Gastrocnemius medialis (tissue), 4 donors: ENCODE measurements at regions of chr19 and their contacts with region 1.

Region 1: GRCh38 chr19:35140962-35141637 is 2.0 kb upstream of the FXYD7 start:
- DNase-seq: peak; percentile 92 to 94
- ATAC-seq: peak; percentile 44 to 51
- H3K4me3 ChIP-seq: peak overlapping the region; percentile 43 to 73 (median 64)
- H3K27ac ChIP-seq: peak overlapping the region; percentile 99 to 100 (median 99)
- H3K4me1 ChIP-seq: peaks cover 33 to 38% of the 10 kb centered on the region in 2 donors
- H3K27me3 ChIP-seq: no peaks in the 10 kb centered on the region
- CTCF ChIP-seq: peak; percentile 7 to 76 (median 54)
- POLR2A ChIP-seq: peak; percentile 88 to 94

Region 2: GRCh38 chr19:34999498-35000341 is 141.4 kb before region 1 on chr19 and contains the start of gene GRAMD1A:
- in situ Hi-C with region 1: no loop called
- intact Hi-C with region 1: loop called (anchors 1 kb)
- DNase-seq: peak; percentile 76 to 86
- ATAC-seq: peak; percentile 83
- H3K4me3 ChIP-seq: peak within 1 kb of the TSS; percentile 67 to 84 (median 73)
- H3K27ac ChIP-seq: peak within 1 kb of the TSS; percentile 91 to 99 (median 97)
- H3K4me1 ChIP-seq: peaks cover 29 to 38% of the 10 kb centered on the region in 2 donors
- H3K27me3 ChIP-seq: no peaks in the 10 kb centered on the region
- CTCF ChIP-seq: no peak
- POLR2A ChIP-seq: peak; percentile 6 to 79
- total RNA-seq, gene GRAMD1A: 38.8 to 45.1 (median 43.7) TPM

Region 3: GRCh38 chr19:35044317-35045117 is 96.6 kb before region 1 on chr19:
- in situ Hi-C with region 1: no loop called
- intact Hi-C with region 1: loop called (anchors 2 kb)
- DNase-seq: peak in 1 of 2 donors; percentile 68
- ATAC-seq: no peak
- H3K4me3 ChIP-seq: no peak overlapping the region
- H3K27ac ChIP-seq: peak overlapping the region; percentile 97 to 98 (median 98)
- H3K4me1 ChIP-seq: peaks cover 59 to 63% of the 10 kb centered on the region in 2 donors
- H3K27me3 ChIP-seq: no peaks in the 10 kb centered on the region
- CTCF ChIP-seq: peak; percentile 96 to 98 (median 97)
- POLR2A ChIP-seq: no peak

Region 4: DNA sequence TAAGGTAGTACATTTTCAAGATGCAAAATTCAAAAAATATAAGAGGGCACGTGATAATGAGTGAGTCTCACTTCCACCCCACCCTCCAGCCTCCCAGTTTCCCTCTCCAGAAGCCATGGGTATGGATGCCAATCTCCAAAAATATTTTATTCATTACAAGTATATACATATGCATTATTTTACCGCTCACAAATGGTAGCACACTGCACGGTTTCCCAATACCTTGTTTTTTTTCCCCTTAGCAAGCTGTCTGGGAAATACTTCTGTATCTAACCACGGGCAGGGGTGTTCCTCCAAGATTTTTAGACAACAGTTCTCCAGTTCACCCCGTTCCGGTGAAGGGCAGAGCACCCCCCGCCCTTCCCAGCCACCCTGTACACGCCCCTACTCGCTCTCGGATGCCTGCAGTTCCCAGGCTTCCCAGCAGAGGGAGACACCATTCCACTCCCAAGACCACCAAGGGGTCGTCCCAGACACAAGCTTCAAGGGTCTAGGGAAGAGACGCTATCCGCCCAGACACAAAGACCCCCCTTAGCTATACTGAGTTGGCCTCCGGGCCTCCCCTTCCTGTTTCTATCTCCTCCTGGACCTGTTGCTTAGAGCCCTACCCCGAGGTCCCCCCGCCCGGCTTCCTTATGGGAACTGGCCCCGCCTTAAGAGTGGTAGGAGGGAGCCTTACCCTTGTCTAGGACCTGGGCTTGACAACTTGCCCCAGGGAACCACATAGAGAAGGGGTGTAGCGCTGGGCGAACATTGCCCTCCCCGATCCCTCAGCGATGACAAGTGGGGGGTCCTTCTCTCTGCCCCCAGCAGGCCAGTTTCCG is 26.5 kb before region 1 on chr19:
- in situ Hi-C with region 1: no loop called
- intact Hi-C with region 1: loop called (anchors 1 kb)
- DNase-seq: peak in 1 of 2 donors; percentile 49
- ATAC-seq: peak; percentile 74
- H3K4me3 ChIP-seq: peak overlapping the region; percentile 32 to 55 (median 48)
- H3K27ac ChIP-seq: peak overlapping the region in 3 of 4 donors; percentile 34 to 45 (median 41)
- H3K4me1 ChIP-seq: peaks cover 6 to 15% of the 10 kb centered on the region in 2 donors
- H3K27me3 ChIP-seq: no peaks in the 10 kb centered on the region
- CTCF ChIP-seq: peak; percentile 91 to 98 (median 97)
- POLR2A ChIP-seq: no peak